Psoas muscle (tissue), 8 donors: ENCODE measurements at regions of chr16 and their contacts with region 1.

Region 1: DNA sequence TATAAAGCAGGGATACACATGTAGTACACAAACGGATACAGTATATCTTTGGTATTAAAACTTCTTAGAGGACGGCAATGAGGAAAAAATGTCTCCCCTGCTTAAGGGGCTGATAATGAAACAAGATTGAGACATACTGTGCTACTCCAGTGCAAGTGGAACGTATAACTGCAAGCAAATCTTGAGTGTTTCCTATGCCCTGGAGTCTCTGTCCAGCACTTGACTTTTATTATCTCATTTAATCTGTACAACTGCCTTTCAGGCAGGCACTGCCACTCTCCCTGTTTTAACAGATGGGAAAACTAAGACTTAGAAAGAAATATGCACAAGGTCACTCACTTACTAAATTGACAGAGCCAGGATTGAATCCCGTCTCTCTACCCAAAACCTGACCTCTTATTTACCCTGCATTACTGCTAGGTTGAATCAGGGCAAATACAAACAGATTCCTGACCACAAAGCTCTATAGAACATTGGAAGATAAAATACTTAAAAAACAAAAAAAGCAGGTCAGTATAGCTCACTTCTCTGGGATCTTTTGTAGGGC is 28.7 kb downstream of the TMC5 start:
- DNase-seq: no peak
- ATAC-seq: no peak
- H3K4me3 ChIP-seq: no peak overlapping the region
- H3K27ac ChIP-seq: no peak overlapping the region
- H3K4me1 ChIP-seq: no peaks in the 10 kb centered on the region
- H3K27me3 ChIP-seq: peaks cover 0 to under 1% (median 0%) of the 10 kb centered on the region in 3 donors
- CTCF ChIP-seq: no peak

Region 2: GRCh38 chr16:19210280-19210924 is 236.0 kb before region 1 on chr16:
- intact Hi-C with region 1: no loop called
- DNase-seq: no peak
- ATAC-seq: no peak
- H3K4me3 ChIP-seq: no peak overlapping the region
- H3K27ac ChIP-seq: no peak overlapping the region
- H3K4me1 ChIP-seq: no peaks in the 10 kb centered on the region
- H3K27me3 ChIP-seq: no peaks in the 10 kb centered on the region
- CTCF ChIP-seq: no peak

Region 3: DNA sequence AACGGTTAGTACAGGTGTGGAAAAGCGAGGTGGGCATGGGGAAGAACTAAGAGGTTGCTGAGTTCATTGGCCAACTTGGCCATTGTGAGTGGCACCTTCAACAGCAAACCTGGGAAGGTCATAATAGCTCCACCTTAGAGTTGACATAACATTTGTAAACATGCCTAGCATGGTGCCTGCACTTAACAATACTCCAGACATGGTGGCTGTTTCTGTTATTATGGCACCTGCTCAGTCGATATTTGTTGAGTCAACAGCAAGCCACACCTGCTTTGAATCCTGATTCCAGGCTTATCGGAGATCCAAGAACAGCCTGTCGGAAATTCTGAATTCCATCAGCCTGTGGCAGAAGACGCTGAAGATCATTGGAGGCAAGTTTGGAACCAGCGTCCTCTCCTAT is 17.1 kb after region 1 on chr16:
- intact Hi-C with region 1: loop called in 1 of 2 experiments (anchors 1 kb)
- DNase-seq: no peak
- ATAC-seq: no peak
- H3K4me3 ChIP-seq: no peak overlapping the region
- H3K27ac ChIP-seq: no peak overlapping the region
- H3K4me1 ChIP-seq: no peaks in the 10 kb centered on the region
- H3K27me3 ChIP-seq: no peaks in the 10 kb centered on the region
- CTCF ChIP-seq: no peak

Region 4: GRCh38 chr16:19542138-19542821 is 95.9 kb after region 1 on chr16:
- intact Hi-C with region 1: no loop called
- DNase-seq: no peak
- ATAC-seq: no peak
- H3K4me3 ChIP-seq: no peak overlapping the region
- H3K27ac ChIP-seq: no peak overlapping the region
- H3K4me1 ChIP-seq: no peaks in the 10 kb centered on the region
- H3K27me3 ChIP-seq: no peaks in the 10 kb centered on the region
- CTCF ChIP-seq: no peak